Activated T-helper 1 cell treated with anti-CD3 and anti-CD28 coated beads, Interleukin-12 subunit alpha, Interleukin-12 subunit beta, Interleukin-2, Interleukin-4 antibody, amounts not matched to agents 30 ng/mL and 10 ng/mL and 1 ng/mL, durations not matched to agents 14 hours and 24 hours and 36 hours (primary cell): ENCODE measurements at regions of chr1 and their contacts with region 1.

Region 1: DNA sequence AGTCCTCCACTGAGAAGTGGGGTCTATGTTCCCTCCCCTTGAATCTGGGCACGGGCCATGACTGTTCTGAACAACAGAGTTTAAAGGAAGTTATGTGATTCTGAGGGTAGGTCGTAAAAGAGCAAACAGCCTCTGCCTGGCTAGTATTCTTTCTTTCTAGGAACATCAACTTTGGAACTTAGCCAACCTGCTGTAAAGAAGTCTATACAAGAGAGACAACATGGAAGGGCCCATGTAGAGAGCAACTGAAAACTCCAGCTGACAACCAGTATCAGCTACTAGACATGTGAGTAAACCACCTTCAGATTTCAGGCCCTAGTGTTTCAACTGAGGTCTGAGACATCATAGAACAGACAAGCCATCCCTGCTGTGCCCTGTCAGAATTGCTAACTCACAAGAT is 7.5 kb downstream of the SELENOF start:
- DNase-seq: no peak
- H3K4me3 Mint-ChIP-seq: no peak overlapping the region
- H3K27ac Mint-ChIP-seq: no peak overlapping the region
- H3K4me1 Mint-ChIP-seq: peaks cover 36% of the 10 kb centered on the region
- H3K27me3 Mint-ChIP-seq: no peaks in the 10 kb centered on the region

Region 2: GRCh38 chr1:85998105-85998855 is 908.1 kb before region 1 on chr1:
- intact Hi-C with region 1: no loop called
- DNase-seq: no peak
- H3K4me3 Mint-ChIP-seq: no peak overlapping the region
- H3K27ac Mint-ChIP-seq: no peak overlapping the region
- H3K4me1 Mint-ChIP-seq: no peaks in the 10 kb centered on the region
- H3K27me3 Mint-ChIP-seq: no peaks in the 10 kb centered on the region

Region 3: DNA sequence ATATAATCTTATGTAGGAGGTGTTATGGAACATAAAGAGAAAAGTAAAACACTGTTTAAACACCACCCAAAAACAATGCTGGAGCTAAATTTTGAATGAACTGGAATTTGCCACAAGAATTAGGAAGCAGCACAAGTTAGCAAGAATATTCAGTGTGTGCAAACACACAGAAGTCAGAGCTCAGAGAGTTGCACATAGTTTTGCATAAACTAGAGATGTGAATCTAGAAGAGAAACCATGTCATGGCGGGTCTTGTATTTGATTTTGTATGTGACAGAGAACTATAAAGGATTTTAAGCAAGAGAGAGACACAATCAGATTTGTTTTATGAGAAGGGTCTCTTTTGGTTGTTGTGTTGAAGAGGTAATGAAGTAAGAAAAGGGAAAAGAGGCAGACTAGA is 30.7 kb before region 1 on chr1:
- intact Hi-C with region 1: loop called (anchors 2 kb)
- DNase-seq: no peak
- H3K4me3 Mint-ChIP-seq: no peak overlapping the region
- H3K27ac Mint-ChIP-seq: no peak overlapping the region
- H3K4me1 Mint-ChIP-seq: no peaks in the 10 kb centered on the region
- H3K27me3 Mint-ChIP-seq: no peaks in the 10 kb centered on the region

Region 4: DNA sequence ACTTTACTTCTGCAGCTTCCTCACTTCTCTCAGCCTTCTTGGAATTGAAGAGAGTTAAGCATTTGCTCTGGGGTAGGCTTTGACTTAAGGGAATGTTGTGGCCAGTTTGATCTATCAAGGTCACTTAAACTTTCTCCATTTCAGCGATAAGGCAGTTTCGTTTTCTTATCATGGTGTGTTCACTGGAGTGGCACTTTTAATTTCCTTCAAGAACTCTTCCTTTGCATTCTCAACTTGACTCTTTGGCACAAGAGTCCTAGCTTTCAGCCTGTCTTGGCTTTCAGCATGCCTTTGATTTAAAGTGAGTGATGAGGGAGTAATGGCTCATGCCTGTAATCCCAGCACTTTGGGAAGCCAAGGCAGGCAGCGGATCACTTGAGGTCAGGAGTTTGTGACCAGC is 46.7 kb after region 1 on chr1:
- intact Hi-C with region 1: no loop called
- DNase-seq: no peak
- H3K4me3 Mint-ChIP-seq: no peak overlapping the region
- H3K27ac Mint-ChIP-seq: no peak overlapping the region
- H3K4me1 Mint-ChIP-seq: no peaks in the 10 kb centered on the region
- H3K27me3 Mint-ChIP-seq: no peaks in the 10 kb centered on the region